ENCODE measurements at regions of chr9 and their contacts with region 1.

Region 1: DNA sequence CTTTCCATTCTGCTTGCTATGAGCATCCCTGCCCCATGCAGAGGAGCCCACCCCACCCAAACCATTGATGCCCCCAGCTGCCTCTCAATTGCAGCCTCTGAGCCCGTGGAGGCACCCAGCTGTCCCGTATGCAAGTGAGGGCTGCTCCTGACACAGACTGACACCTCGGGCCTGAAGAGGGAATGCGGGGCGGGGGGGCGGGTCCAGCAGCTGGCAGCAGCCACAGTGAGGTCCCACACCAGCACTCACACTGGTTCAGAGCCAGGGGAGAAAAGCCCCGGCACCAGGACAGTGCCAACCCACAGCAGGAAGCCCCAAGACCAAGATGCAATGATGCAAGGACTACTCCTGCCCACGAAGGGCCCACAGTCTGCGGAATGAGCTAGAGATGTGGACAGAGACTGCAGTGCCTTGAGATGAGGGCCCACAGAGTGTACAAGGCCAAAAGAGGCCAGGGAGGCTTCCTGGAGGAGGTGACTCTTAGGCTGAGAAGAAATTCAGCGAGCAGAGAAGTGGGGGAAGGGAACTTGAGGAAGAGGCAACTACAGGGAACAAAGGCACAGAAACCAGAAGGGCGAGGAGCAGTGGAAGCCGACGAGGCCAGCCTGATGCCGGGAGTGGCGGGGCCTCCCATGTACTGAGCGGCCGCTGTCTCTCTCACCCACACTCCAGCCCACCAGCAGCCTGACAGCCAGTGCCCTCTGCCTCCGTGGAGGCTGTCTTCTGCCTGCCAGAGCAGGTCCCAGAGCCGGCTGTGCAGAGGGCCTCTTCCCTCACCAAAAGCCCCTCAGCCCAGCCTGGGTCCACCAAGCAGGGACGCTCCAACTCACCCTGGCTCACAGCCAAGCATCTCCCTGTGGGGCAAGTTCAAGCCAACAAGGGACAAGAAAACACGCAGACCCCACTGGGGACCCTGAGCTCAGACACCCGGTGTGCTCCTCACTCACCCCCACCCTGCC is 9.2 kb downstream of the EEIG1 start:
- DNase-seq: peak in 3 of 5 donors; percentile 25 to 62 (median 29)
- ATAC-seq: no peak
- H3K4me3 ChIP-seq: peak overlapping the region in 1 of 12 donors; percentile 31
- H3K27ac ChIP-seq: peak overlapping the region in 11 of 12 donors; percentile 66 to 95 (median 84)
- H3K4me1 ChIP-seq: peaks cover 3 to 100% (median 94%) of the 10 kb centered on the region in 12 donors
- H3K27me3 ChIP-seq: no peaks in the 10 kb centered on the region
- CTCF ChIP-seq: no peak
- POLR2A ChIP-seq: no peak

Region 2: GRCh38 chr9:127949827-127950512 is 21.7 kb before region 1 on chr9:
- intact Hi-C with region 1: loop called in 1 of 10 experiments (anchors 1 kb)
- DNase-seq: peak in 3 of 5 donors; percentile 62 to 72 (median 68)
- ATAC-seq: peak; percentile 10 to 61 (median 40)
- H3K4me3 ChIP-seq: peak overlapping the region in 5 of 12 donors; percentile 12 to 27 (median 19)
- H3K27ac ChIP-seq: peak overlapping the region; percentile 53 to 90 (median 80)
- H3K4me1 ChIP-seq: peaks cover 0 to 86% (median 48%) of the 10 kb centered on the region in 12 donors
- H3K27me3 ChIP-seq: no peaks in the 10 kb centered on the region
- CTCF ChIP-seq: no peak
- POLR2A ChIP-seq: no peak

Region 3: GRCh38 chr9:128007566-128008138 is 36.0 kb after region 1 on chr9:
- intact Hi-C with region 1: loop called in 1 of 10 experiments (anchors 2 kb)
- DNase-seq: peak; percentile 40 to 75 (median 54)
- ATAC-seq: peak in 3 of 4 donors; percentile 18 to 44 (median 27)
- H3K4me3 ChIP-seq: peak overlapping the region in 1 of 12 donors; percentile 17
- H3K27ac ChIP-seq: peak overlapping the region in 2 of 12 donors; percentile 13 to 73
- H3K4me1 ChIP-seq: peaks cover 0 to 43% (median 12%) of the 10 kb centered on the region in 12 donors
- H3K27me3 ChIP-seq: no peaks in the 10 kb centered on the region
- CTCF ChIP-seq: no peak
- POLR2A ChIP-seq: no peak

Region 4: GRCh38 chr9:128067876-128068613 is 96.4 kb after region 1 on chr9 and contains the start of gene SLC25A25:
- intact Hi-C with region 1: no loop called
- DNase-seq: peak; percentile 100
- ATAC-seq: peak; percentile 94 to 97 (median 96)
- H3K4me3 ChIP-seq: peak within 1 kb of the TSS; percentile 66 to 96 (median 80)
- H3K27ac ChIP-seq: peak within 1 kb of the TSS; percentile 91 to 99 (median 98)
- H3K4me1 ChIP-seq: peaks cover 6 to 70% (median 42%) of the 10 kb centered on the region in 12 donors
- H3K27me3 ChIP-seq: no peaks in the 10 kb centered on the region
- CTCF ChIP-seq: no peak
- POLR2A ChIP-seq: peak in 1 of 2 donors; percentile 84
- total RNA-seq, gene SLC25A25: 3.2 to 15.1 (median 6.7) TPM

Measured in heart left ventricle (tissue), 16 donors.